ENCODE measurements at regions of chr17 and their contacts with region 1.

Region 1: DNA sequence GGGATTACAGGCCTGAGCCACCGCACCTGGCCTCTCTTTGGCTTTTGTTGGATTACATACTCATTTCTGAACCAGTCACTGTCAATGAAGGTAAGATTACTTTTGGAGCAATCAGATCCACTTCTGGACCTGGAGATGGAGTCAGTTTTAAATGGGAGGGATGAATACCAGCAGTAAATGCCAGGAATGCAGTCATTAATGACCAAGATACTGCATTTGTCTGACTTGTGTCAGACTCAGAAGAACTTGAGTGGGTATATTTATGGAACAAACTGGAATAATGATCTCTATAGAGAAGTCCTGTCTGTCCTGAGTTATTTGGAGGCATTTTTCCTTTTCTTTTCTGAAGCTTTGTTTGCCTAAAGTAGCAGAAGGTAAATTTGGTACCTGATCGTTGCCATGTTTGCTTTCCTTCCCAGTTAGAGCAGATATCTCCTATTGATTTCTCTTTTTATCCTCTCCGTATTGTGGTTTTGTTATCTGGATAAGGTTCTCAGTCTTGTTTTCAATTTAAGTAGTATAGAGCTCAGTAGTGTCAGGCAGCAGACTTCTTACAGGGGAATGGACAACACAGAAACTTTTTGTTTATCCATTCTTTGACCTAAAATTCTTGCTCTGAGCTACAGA is 10.7 kb downstream of the NLK start:
- DNase-seq: no peak
- H3K4me3 ChIP-seq: no peak overlapping the region
- H3K4me3 Mint-ChIP-seq: peak overlapping the region; percentile 5
- H3K27ac Mint-ChIP-seq: peak overlapping the region; percentile 17
- H3K4me1 ChIP-seq: peaks cover 31% of the 10 kb centered on the region
- H3K4me1 Mint-ChIP-seq: peaks cover 58% of the 10 kb centered on the region
- H3K27me3 ChIP-seq: no peaks in the 10 kb centered on the region
- H3K27me3 Mint-ChIP-seq: no peaks in the 10 kb centered on the region
- CTCF ChIP-seq: no peak

Region 2: DNA sequence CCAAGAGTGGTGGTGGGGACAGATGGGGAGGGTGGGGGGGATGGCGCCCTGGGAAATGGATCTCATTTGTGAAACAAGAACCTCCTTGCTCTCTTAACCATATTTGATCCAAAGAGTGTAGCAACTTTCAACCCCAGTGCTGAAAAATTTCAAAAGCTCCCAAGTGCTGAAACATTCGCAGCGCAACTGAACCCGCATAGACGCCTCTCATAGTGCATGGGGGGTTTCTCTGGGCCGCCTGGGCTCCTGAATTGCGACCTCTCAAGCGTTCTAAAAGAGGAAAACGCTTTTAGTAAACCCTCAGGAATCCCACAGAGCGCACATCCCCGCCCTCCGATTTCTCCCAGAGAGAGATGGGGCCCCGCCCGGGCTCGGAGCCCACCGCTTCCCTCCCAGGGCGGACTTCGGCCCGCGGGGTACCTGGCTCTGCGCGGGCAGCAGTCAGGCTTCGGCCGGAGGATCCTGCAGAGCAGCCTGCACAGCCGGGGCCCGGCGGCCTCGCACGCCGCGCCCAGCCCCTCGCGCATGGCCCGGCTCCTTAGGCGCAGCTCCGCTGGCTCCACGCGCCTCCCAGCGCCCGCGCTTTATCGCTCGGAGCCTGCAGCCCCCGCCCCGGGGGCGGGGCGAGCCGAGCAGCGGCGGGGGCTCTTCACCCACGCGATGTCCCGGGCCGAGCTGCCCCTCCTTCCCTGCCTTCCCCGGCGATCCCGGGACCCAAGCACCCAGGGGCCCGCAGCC is 259.8 kb before region 1 on chr17:
- CTCF ChIA-PET with region 1: no interaction called
- POLR2A ChIA-PET with region 1: interaction called, 11 read pairs
- intact Hi-C with region 1: no loop called
- DNase-seq: peak; percentile 83 to 90
- H3K4me3 ChIP-seq: peak overlapping the region; percentile 56
- H3K4me3 Mint-ChIP-seq: peak overlapping the region; percentile 80
- H3K27ac Mint-ChIP-seq: peak overlapping the region; percentile 53
- H3K4me1 ChIP-seq: peaks cover 42% of the 10 kb centered on the region
- H3K4me1 Mint-ChIP-seq: peaks cover 44% of the 10 kb centered on the region
- H3K27me3 ChIP-seq: no peaks in the 10 kb centered on the region
- H3K27me3 Mint-ChIP-seq: no peaks in the 10 kb centered on the region
- CTCF ChIP-seq: no peak

Region 3: DNA sequence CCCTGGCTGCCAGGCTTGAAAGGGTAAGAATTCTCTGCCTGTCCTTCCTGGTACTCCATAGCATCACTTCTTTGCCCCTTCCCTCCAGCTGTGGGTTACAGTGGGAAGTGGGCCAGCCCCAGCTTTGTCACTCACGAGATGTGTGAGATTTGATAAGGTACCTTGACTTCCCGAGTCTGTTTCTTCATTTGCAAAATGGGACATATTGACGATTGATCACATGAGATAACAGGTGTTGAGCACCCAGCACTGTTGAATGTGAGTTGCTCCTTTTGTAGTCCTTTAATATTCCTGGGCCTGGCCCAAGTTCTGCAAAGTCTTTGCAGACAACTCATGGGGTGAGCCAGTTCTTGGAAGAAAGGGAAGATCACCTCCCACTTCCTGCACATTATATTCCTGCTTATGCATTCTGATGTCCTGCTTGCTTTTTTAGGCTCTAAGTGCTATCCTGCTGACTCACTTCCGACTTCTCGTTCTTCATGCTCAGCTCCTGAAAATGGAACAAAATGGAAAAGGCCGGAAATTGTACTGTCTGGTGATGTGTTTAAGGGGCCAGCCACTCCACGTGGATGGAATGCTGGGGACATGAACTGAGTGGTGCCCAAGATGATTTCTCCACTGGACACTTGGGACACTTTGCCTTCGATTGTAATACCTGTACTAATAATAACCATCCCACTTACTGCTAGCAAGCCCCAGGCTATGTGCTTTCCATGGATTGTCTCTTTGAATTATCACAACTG is 19.0 kb before region 1 on chr17:
- CTCF ChIA-PET with region 1: no interaction called
- POLR2A ChIA-PET with region 1: no interaction called
- intact Hi-C with region 1: no loop called
- DNase-seq: no peak
- H3K4me3 ChIP-seq: no peak overlapping the region
- H3K4me3 Mint-ChIP-seq: no peak overlapping the region
- H3K27ac Mint-ChIP-seq: no peak overlapping the region
- H3K4me1 ChIP-seq: peaks cover 5% of the 10 kb centered on the region; the same call in 1 of the 2 replicates
- H3K4me1 Mint-ChIP-seq: no peaks in the 10 kb centered on the region
- H3K27me3 ChIP-seq: no peaks in the 10 kb centered on the region
- H3K27me3 Mint-ChIP-seq: no peaks in the 10 kb centered on the region
- CTCF ChIP-seq: no peak

Region 4: DNA sequence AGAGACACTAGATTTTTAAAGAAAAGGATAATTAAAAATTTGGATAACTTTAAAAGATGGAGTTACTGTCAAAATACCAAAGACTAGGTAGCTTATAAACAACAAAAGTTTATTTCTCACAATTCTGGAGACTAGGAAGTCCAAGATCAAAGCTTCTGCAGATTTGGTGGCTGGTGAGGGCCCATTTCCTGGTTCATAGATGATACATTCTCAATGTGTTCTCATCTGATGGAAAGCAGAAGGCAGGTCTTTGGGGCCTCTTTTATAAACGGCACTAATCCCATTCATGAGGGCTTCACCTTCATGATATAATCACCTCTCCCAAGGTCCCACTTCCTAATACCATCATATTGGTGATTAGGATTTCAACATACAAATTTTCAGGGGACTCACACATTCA is 23.0 kb after region 1 on chr17:
- CTCF ChIA-PET with region 1: no interaction called
- POLR2A ChIA-PET with region 1: no interaction called
- intact Hi-C with region 1: no loop called
- DNase-seq: no peak
- H3K4me3 ChIP-seq: no peak overlapping the region
- H3K4me3 Mint-ChIP-seq: no peak overlapping the region
- H3K27ac Mint-ChIP-seq: no peak overlapping the region
- H3K4me1 ChIP-seq: peaks cover 10% of the 10 kb centered on the region
- H3K4me1 Mint-ChIP-seq: peaks cover 28% of the 10 kb centered on the region
- H3K27me3 ChIP-seq: no peaks in the 10 kb centered on the region
- H3K27me3 Mint-ChIP-seq: no peaks in the 10 kb centered on the region
- CTCF ChIP-seq: no peak

Region 5: GRCh38 chr17:28093999-28094716 is 41.0 kb after region 1 on chr17:
- CTCF ChIA-PET with region 1: no interaction called
- POLR2A ChIA-PET with region 1: no interaction called
- intact Hi-C with region 1: no loop called
- DNase-seq: no peak
- H3K4me3 ChIP-seq: no peak overlapping the region
- H3K4me3 Mint-ChIP-seq: no peak overlapping the region
- H3K27ac Mint-ChIP-seq: no peak overlapping the region
- H3K4me1 ChIP-seq: peaks cover 25% of the 10 kb centered on the region
- H3K4me1 Mint-ChIP-seq: peaks cover 15% of the 10 kb centered on the region
- H3K27me3 ChIP-seq: no peaks in the 10 kb centered on the region
- H3K27me3 Mint-ChIP-seq: no peaks in the 10 kb centered on the region
- CTCF ChIP-seq: no peak

Region 6: GRCh38 chr17:28161311-28161710 is 108.2 kb after region 1 on chr17:
- CTCF ChIA-PET with region 1: no interaction called
- POLR2A ChIA-PET with region 1: no interaction called
- intact Hi-C with region 1: no loop called
- DNase-seq: no peak
- H3K4me3 ChIP-seq: no peak overlapping the region
- H3K4me3 Mint-ChIP-seq: no peak overlapping the region
- H3K27ac Mint-ChIP-seq: no peak overlapping the region
- H3K4me1 ChIP-seq: peaks cover 6% of the 10 kb centered on the region; the same call in 1 of the 2 replicates
- H3K4me1 Mint-ChIP-seq: peaks cover 23% of the 10 kb centered on the region
- H3K27me3 ChIP-seq: no peaks in the 10 kb centered on the region
- H3K27me3 Mint-ChIP-seq: no peaks in the 10 kb centered on the region
- CTCF ChIP-seq: no peak